Posterior cingulate gyrus (tissue), 11 donors: ENCODE measurements at regions of chr2 and their contacts with region 1.

Region 1: DNA sequence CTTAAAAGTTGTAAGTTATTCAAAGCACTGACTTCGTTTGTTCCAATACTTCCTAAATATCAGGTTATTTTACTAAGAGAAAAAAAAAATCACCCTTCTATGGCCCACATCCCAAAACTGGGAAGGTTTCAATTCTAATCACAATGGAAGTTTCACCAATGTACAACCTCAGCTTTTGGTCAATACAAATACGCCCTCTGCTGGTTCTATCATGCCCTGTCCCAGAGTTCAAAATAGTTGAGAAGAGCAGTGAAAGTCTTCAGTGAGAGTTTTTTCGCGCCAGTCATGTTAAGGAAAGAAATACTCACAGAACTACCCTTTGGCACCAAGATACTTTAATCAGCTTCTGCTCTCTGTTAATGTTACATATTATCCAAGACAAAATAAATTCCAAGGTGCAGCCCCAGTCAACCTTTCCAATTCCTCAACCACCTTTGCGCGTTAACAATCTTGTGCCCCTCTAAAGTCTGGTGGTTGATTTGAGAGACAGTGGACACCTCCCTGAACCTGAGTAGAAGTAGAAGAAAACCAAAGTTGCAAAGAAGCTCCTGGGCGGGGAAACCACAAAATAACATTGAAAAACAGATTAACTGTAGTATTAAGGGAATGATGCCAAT is 59.9 kb downstream of the SUMO1 start:
- DNase-seq: peak in 4 of 10 donors; percentile 39 to 50 (median 42)

Region 2: DNA sequence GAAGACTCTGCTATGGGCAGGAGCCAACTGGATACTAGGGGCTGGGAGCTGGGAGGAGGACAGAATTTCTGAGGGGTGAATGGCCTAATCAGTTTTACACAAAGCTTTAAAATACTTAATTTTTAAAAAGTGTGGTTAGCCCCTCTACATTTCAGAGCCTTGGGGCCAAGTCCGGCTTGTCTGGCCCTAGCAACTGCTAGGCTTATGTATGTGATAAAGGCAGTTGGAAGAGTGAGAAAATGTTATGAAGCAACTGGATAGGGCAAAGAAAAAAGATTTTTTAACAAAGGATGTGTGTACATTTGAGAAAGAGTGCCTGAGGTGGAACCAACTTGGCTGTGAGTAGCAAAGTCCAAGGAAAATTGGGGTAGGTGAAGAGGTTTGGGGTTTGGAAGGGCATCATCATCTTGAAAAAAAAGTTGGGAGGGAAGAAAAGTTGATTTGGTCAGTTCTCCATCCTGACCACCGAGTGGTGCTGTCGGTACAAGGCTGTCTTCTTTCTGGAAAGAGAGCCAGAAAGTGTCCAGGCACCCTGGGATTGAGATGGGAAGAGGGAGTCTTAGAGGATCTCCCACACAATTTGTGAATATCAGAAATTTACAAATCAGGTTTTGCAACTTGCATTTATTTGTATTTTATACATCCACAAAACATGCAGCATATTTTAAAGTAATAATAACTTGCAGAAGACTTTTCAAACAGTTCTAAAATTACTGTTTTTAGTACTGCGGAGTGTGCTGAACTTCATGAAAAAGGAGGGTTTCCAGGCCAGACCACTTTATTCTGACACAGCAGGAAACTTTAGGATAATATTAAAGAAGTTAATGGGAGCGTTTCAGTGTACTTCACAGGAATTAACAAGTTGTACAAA is 382.6 kb before region 1 on chr2:
- intact Hi-C with region 1: loop called (anchors 2 kb)
- DNase-seq: peak in 4 of 10 donors; percentile 19 to 76 (median 28)

Region 3: GRCh38 chr2:201860636-201861066 is 317.8 kb before region 1 on chr2:
- intact Hi-C with region 1: loop called (anchors 1 kb)
- DNase-seq: peak in 5 of 10 donors; percentile 35 to 84 (median 41)

Region 4: DNA sequence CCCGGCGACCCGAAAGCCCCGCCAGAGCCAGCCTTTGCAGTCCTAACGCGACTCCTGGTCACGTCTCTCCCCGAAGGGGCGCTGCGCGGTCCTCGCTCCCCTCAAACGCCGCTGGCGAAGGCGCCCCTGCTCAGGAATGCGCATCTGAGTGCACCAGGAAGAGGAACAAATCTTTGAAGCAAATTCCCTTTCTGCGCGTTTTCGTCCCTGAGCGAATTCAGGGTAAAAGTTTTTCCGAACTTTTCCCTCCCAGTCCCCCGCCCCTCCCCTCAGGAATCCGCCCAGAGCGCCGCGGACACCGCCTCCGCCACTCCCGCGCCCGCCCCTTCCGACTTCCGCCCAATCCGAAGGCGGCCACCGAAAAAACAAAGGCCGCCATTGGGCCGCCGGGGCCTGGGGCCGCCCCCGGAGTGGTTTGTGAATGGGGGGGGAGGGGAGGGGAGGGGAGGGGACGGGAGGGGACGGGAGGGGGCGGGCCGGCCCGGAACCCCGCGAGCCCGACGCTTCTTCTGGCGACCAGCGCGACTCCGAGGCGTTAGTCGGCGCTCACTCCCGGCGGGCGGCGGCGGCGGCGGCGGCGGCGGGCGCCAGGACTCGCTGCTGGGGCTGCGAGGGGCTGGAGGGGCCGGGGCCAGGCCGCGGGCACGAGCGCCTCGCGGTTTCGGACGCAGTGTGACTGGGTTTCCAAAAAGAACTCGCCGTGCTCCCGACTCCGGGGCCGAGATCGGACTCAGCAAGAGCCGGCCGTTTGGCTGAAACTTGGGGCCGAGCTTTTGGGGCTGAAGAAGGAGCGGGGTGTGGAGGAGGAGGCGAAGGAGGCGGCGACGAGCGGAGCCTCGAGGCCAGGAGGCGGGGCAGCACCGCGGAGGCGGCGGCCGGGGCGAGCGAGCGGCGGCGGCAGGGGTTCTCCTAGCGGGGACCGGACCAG is 144.9 kb before region 1 on chr2 and contains the start of gene FZD7:
- intact Hi-C with region 1: loop called (anchors 5 kb)
- DNase-seq: peak; percentile 70 to 95 (median 80)

Region 5: DNA sequence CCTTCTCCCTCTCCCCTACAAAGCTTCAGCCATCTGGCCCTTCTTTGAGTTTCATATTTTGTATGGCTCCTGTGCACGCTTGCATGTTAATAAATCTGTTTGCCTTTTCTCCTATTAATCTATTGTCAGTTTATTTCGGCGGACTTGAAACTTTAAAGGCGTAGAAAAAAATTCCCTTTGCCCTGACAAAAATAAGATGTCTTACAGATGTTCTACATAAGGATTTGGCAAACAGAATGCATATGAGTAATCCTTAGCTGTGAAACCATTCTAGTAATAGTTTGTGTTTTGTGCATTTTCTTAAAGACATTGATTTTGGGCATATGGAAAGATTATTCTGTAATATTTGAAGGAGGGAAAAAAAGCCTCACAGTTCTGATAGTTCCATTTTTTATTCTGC is 182.7 kb after region 1 on chr2:
- intact Hi-C with region 1: no loop called
- DNase-seq: no peak